HCT116 (cell line): ENCODE measurements at regions of chr11 and their contacts with region 1.

Region 1: GRCh38 chr11:72471005-72471898 is 36.9 kb upstream of the CLPB start:
- DNase-seq: peak; percentile 61
- ATAC-seq: peak; percentile 99
- H3K4me3 ChIP-seq: no peak overlapping the region; a peak in 1 of 4 replicates
- H3K27ac ChIP-seq: no peak overlapping the region
- H3K4me1 ChIP-seq: peaks cover 3 to 10% of the 10 kb centered on the region in 2 experiments; a peak in 3 of 4 replicates
- H3K27me3 ChIP-seq: peaks cover 3% of the 10 kb centered on the region; the same call in 1 of the 2 replicates
- CTCF ChIP-seq: peak; percentile 82 to 89 (median 87)
- POLR2A ChIP-seq: no peak
- RAD21 ChIP-seq: peak; percentile 84

Region 2: GRCh38 chr11:72446902-72447769 is 24.1 kb before region 1 on chr11:
- CTCF ChIA-PET with region 1: interaction called, 17 read pairs
- POLR2A ChIA-PET with region 1: no interaction called
- RAD21 ChIA-PET with region 1: no interaction called
- intact Hi-C with region 1: no loop called
- DNase-seq: peak; percentile 69
- ATAC-seq: peak; percentile 87
- H3K4me3 ChIP-seq: no peak overlapping the region
- H3K27ac ChIP-seq: no peak overlapping the region
- H3K4me1 ChIP-seq: no peaks in the 10 kb centered on the region
- H3K27me3 ChIP-seq: no peaks in the 10 kb centered on the region
- CTCF ChIP-seq: peak; percentile 73 to 99 (median 79)
- POLR2A ChIP-seq: no peak
- RAD21 ChIP-seq: peak; percentile 82

Region 3: GRCh38 chr11:72493426-72494108 is 22.3 kb after region 1 on chr11:
- CTCF ChIA-PET with region 1: interaction called, 15 read pairs
- POLR2A ChIA-PET with region 1: no interaction called
- RAD21 ChIA-PET with region 1: no interaction called
- intact Hi-C with region 1: no loop called
- DNase-seq: no peak
- ATAC-seq: no peak
- H3K4me3 ChIP-seq: no peak overlapping the region
- H3K27ac ChIP-seq: no peak overlapping the region
- H3K4me1 ChIP-seq: no peaks in the 10 kb centered on the region
- H3K27me3 ChIP-seq: no peaks in the 10 kb centered on the region
- CTCF ChIP-seq: no peak
- POLR2A ChIP-seq: no peak
- RAD21 ChIP-seq: no peak

Region 4: GRCh38 chr11:72573072-72573854 is 102.0 kb after region 1 on chr11:
- CTCF ChIA-PET with region 1: interaction called, 53 read pairs
- POLR2A ChIA-PET with region 1: no interaction called
- RAD21 ChIA-PET with region 1: interaction called, 4 to 6 read pairs
- intact Hi-C with region 1: loop called (anchors 1 kb)
- DNase-seq: peak; percentile 23
- ATAC-seq: peak; percentile 97
- H3K4me3 ChIP-seq: no peak overlapping the region
- H3K27ac ChIP-seq: no peak overlapping the region
- H3K4me1 ChIP-seq: peaks cover 0 to 9% of the 10 kb centered on the region in 2 experiments; a peak in 2 of 4 replicates
- H3K27me3 ChIP-seq: no peaks in the 10 kb centered on the region
- CTCF ChIP-seq: peak; percentile 45 to 72 (median 66)
- POLR2A ChIP-seq: no peak
- RAD21 ChIP-seq: peak; percentile 74

Region 5: DNA sequence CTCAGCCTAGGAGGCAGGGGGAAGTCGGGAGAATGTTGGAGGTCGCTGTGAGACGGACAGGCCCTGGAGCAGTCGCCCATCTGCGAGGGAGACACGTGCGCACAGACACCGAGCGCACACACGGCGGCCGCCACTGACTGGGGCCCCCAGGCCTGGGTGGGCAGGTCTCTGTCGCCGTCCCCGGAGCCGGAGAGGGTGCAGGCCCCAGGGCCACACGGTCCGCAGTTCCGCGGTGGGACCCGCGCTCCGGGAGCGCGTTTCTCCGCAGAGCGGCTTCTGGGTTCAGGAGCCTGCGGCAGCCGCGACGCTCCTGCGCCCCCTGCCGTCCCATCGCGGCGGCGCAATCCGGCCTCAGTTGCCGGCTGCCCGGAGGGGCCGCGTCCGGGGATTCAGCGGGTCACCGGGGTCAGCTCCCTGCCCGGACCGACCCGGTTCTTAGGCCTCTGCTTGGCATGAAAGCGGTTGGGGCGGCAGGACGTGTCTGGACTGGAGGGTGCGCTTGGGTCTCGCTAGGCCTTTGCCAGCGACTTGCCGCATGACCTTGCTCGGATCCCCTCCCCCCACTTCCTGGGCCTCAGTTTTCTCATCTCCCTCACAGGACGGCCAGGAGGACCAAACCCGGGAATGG is 171.7 kb after region 1 on chr11:
- CTCF ChIA-PET with region 1: interaction called, 16 read pairs
- POLR2A ChIA-PET with region 1: no interaction called
- RAD21 ChIA-PET with region 1: interaction called in 1 of 2 experiments, 3 read pairs
- intact Hi-C with region 1: no loop called
- DNase-seq: peak; percentile 32
- ATAC-seq: peak; percentile 80
- H3K4me3 ChIP-seq: peak overlapping the region; percentile 44 to 59
- H3K27ac ChIP-seq: no peak overlapping the region; the same call in 1 of the 2 replicates
- H3K4me1 ChIP-seq: peaks cover 4 to 22% of the 10 kb centered on the region in 2 experiments; a peak in 3 of 4 replicates
- H3K27me3 ChIP-seq: peaks cover 13% of the 10 kb centered on the region; the same call in 1 of the 2 replicates
- CTCF ChIP-seq: peak; percentile 74 to 86 (median 78)
- POLR2A ChIP-seq: no peak
- RAD21 ChIP-seq: peak; percentile 86